ENCODE measurements at regions of chr10 and their contacts with region 1.

Region 1: GRCh38 chr10:6445501-6446316 is 134.4 kb downstream of the PRKCQ start:
- DNase-seq: peak; percentile 18
- ATAC-seq: peak; percentile 78
- H3K4me3 ChIP-seq: no peak overlapping the region
- H3K27ac ChIP-seq: no peak overlapping the region
- H3K4me1 ChIP-seq: no peaks in the 10 kb centered on the region
- H3K27me3 ChIP-seq: peaks cover 4% of the 10 kb centered on the region; the same call in 1 of the 2 replicates
- CTCF ChIP-seq: peak; percentile 57 to 74 (median 72)
- POLR2A ChIP-seq: no peak
- RAD21 ChIP-seq: peak; percentile 56

Region 2: GRCh38 chr10:6647811-6648526 is 202.3 kb after region 1 on chr10:
- CTCF ChIA-PET with region 1: no interaction called
- POLR2A ChIA-PET with region 1: no interaction called
- RAD21 ChIA-PET with region 1: no interaction called
- intact Hi-C with region 1: loop called (anchors 1 kb)
- DNase-seq: peak; percentile 22
- ATAC-seq: peak; percentile 97
- H3K4me3 ChIP-seq: no peak overlapping the region
- H3K27ac ChIP-seq: no peak overlapping the region
- H3K4me1 ChIP-seq: no peaks in the 10 kb centered on the region
- H3K27me3 ChIP-seq: peaks cover 41% of the 10 kb centered on the region
- CTCF ChIP-seq: peak; percentile 22 to 79 (median 73); a peak in 5 of 6 replicates
- POLR2A ChIP-seq: no peak
- RAD21 ChIP-seq: peak; percentile 48

Region 3: GRCh38 chr10:6694447-6695140 is 248.9 kb after region 1 on chr10:
- CTCF ChIA-PET with region 1: no interaction called
- POLR2A ChIA-PET with region 1: no interaction called
- RAD21 ChIA-PET with region 1: no interaction called
- intact Hi-C with region 1: no loop called
- DNase-seq: no peak
- ATAC-seq: no peak
- H3K4me3 ChIP-seq: no peak overlapping the region
- H3K27ac ChIP-seq: no peak overlapping the region
- H3K4me1 ChIP-seq: no peaks in the 10 kb centered on the region
- H3K27me3 ChIP-seq: peaks cover 57% of the 10 kb centered on the region
- CTCF ChIP-seq: no peak
- POLR2A ChIP-seq: no peak
- RAD21 ChIP-seq: no peak

Measured in HCT116 (cell line).